Activated CD8-positive, alpha-beta T cell treated with anti-CD3 and anti-CD28 coated beads, Interleukin-2, amount 10 ng/mL, durations not matched to agents 7 days and 5 days (primary cell): ENCODE measurements at regions of chr2 and their contacts with region 1.

Region 1: GRCh38 chr2:231557571-231558237 is 27.5 kb upstream of the NMUR1 start:
- DNase-seq: peak; percentile 80
- ATAC-seq: peak; percentile 96
- H3K4me3 Mint-ChIP-seq: no peak overlapping the region
- H3K27ac Mint-ChIP-seq: peak overlapping the region; percentile 40
- H3K4me1 Mint-ChIP-seq: peaks cover 32% of the 10 kb centered on the region
- H3K27me3 Mint-ChIP-seq: peaks cover 6% of the 10 kb centered on the region

Region 2: DNA sequence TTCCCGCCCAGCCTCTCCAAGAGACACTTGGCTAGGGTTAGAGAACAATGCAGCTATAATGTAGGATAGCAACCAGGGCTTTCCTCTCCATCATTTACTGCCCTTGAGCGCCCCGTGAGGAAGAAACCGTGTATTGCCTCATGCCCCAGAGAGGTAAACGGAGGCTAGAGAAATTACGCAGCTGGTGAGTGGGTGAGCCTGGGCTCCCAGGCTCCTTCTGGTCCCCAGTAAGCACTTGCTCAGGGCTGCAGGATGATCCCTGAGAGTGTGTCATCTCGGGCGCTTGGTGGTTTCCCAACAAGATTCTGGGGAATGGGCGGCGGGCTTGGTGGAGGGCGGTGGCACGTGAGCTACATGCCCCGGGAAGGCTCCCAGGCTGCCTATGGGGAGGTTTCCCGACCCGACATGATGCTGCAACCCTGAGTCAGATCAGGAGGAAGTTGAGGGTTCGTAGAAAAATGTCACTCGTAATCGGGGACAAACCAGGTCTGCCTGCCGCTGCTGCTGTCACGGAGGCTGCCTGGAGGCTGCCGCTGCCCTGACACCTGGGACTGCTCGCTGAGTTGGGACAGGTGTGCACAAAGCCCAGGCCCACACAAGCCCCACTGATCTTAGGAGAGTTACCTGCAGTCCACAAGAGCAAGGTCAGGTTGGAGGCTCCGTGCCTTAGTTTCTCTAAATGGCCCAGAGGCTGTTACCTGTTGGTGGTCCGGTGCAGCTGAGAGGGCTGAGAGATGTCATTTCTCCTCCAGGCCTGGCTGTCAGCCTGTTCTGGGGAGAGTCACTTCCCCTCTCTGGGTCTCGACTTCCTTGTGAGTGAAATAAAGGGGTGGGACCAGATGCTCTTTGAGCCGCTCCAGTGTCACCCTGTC is 633.0 kb before region 1 on chr2 and contains the start of gene GPR55:
- CTCF ChIA-PET with region 1: no interaction called
- POLR2A ChIA-PET with region 1: no interaction called
- DNase-seq: peak; percentile 65
- ATAC-seq: peak; percentile 71
- H3K4me3 Mint-ChIP-seq: peak within 1 kb of the TSS; percentile 88
- H3K27ac Mint-ChIP-seq: peak within 1 kb of the TSS; percentile 94
- H3K4me1 Mint-ChIP-seq: peaks cover 81% of the 10 kb centered on the region
- H3K27me3 Mint-ChIP-seq: no peaks in the 10 kb centered on the region
- total RNA-seq, gene GPR55: 12.3 to 12.5 TPM

Region 3: DNA sequence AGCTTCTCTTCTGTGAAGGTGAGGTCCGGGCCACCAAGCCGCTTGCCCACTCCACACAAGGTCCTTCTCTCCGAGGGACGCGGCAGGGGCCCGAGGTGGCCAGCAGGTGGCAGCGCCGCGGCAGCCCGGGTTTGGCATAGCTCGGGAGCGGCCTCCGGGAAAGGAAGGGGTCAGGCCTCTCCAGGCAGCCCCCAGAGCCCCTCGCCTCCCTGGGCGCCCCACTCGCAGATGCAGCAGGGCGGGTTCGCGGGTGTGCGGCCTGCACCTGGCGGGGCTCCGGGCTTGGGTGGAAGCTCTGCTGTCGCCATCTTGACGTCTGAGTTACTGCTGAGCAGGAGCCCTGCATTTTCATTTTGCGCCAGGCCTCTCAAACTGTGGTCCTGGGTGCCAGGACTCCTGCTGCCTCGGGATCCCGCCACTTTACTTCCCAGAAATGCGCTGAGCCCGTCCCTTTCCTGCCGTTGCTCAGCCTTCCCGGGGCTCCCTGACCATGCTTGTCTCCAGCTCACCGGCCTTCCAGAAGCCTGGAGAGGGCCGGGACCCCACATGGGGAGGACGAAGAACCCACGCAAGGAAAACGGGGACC is 74.8 kb before region 1 on chr2:
- CTCF ChIA-PET with region 1: interaction called, 15 read pairs
- POLR2A ChIA-PET with region 1: no interaction called
- DNase-seq: peak; percentile 77
- ATAC-seq: peak; percentile 90
- H3K4me3 Mint-ChIP-seq: peak overlapping the region; percentile 75
- H3K27ac Mint-ChIP-seq: peak overlapping the region; percentile 88
- H3K4me1 Mint-ChIP-seq: peaks cover 20% of the 10 kb centered on the region
- H3K27me3 Mint-ChIP-seq: peaks cover 5% of the 10 kb centered on the region

Region 4: DNA sequence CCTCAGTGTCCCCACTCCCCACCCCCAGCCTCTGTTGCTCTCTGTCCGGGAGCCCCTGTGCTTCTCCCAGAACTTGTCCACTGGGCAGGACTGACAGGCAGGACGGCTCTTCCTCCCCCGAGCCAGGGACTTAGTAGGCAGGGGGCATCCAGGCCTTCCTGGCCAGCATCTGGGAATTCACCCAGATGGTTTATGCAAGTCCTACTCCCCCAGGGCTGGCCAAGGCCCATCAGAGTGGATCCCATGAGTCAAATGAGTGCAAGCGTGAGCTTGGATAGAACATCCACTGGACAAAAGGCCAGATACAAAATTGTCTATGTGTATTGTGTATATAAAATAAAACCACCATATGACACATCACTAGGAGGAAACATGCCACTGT is 34.9 kb before region 1 on chr2:
- CTCF ChIA-PET with region 1: interaction called, 26 read pairs
- POLR2A ChIA-PET with region 1: no interaction called
- DNase-seq: no peak
- ATAC-seq: no peak
- H3K4me3 Mint-ChIP-seq: no peak overlapping the region
- H3K27ac Mint-ChIP-seq: no peak overlapping the region
- H3K4me1 Mint-ChIP-seq: peaks cover 60% of the 10 kb centered on the region
- H3K27me3 Mint-ChIP-seq: peaks cover 48% of the 10 kb centered on the region

Region 5: DNA sequence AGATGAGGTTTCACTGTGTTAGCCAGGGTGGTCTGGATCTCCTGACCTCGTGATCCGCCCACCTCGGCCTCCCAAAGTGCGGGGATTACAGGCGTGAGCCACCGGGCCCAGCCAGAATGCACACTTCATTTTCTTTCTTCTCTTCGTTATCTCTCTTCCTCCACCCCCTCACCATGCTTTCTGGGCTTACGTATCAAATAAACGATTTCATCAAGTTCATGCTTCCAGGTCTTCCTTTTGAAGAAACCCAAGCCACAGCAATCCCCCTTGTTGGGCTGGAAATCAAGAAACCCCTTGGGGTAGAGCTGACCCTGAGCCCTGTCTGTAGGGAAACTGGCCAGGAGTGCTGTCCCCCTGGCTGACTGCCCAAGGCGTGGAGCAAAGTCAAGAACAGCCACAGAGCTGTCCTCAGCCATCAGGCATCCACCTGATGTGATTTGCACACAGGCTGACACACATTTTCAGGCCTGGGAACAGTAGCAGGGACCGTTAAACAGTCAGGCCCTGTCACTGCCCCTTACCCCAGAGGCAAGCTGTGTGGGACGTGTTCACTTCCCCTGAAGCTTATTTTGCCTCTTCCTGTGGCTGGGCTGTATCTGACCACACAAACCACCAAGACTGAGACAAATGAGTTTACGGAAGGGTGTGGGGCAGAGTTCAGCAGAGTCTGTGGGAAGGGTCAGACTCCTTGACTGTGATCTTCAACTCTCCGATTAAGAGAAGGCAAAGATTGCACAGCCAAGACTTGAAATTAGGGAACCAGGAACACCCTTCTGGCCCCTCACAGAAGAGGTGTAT is 12.4 kb before region 1 on chr2:
- CTCF ChIA-PET with region 1: interaction called, 23 read pairs
- POLR2A ChIA-PET with region 1: no interaction called
- DNase-seq: peak; percentile 88
- ATAC-seq: peak; percentile 92
- H3K4me3 Mint-ChIP-seq: peak overlapping the region; percentile 57
- H3K27ac Mint-ChIP-seq: peak overlapping the region; percentile 90
- H3K4me1 Mint-ChIP-seq: peaks cover 39% of the 10 kb centered on the region
- H3K27me3 Mint-ChIP-seq: peaks cover 18% of the 10 kb centered on the region

Region 6: GRCh38 chr2:231786177-231786916 is 228.6 kb after region 1 on chr2 and contains the start of gene COPS7B:
- CTCF ChIA-PET with region 1: no interaction called
- POLR2A ChIA-PET with region 1: no interaction called
- DNase-seq: peak; percentile 84
- ATAC-seq: peak; percentile 73
- H3K4me3 Mint-ChIP-seq: peak within 1 kb of the TSS; percentile 91
- H3K27ac Mint-ChIP-seq: peak within 1 kb of the TSS; percentile 84
- H3K4me1 Mint-ChIP-seq: peaks cover 51% of the 10 kb centered on the region
- H3K27me3 Mint-ChIP-seq: no peaks in the 10 kb centered on the region
- total RNA-seq, gene COPS7B: 47.5 to 47.7 TPM